ENCODE measurements at regions of chr14 and their contacts with region 1.

Region 1: GRCh38 chr14:36320200-36320896 is at the start of gene MBIP:
- DNase-seq: peak; percentile 78 to 95
- H3K4me3 ChIP-seq: peak within 1 kb of the TSS; percentile 68 to 93
- H3K27ac ChIP-seq: peak within 1 kb of the TSS; percentile 62 to 82
- H3K4me1 ChIP-seq: peaks cover 0 to 7% of the 10 kb centered on the region in 2 donors
- H3K27me3 ChIP-seq: no peaks in the 10 kb centered on the region
- CTCF ChIP-seq: no peak
- total RNA-seq, gene MBIP: 2.2 TPM

Region 2: DNA sequence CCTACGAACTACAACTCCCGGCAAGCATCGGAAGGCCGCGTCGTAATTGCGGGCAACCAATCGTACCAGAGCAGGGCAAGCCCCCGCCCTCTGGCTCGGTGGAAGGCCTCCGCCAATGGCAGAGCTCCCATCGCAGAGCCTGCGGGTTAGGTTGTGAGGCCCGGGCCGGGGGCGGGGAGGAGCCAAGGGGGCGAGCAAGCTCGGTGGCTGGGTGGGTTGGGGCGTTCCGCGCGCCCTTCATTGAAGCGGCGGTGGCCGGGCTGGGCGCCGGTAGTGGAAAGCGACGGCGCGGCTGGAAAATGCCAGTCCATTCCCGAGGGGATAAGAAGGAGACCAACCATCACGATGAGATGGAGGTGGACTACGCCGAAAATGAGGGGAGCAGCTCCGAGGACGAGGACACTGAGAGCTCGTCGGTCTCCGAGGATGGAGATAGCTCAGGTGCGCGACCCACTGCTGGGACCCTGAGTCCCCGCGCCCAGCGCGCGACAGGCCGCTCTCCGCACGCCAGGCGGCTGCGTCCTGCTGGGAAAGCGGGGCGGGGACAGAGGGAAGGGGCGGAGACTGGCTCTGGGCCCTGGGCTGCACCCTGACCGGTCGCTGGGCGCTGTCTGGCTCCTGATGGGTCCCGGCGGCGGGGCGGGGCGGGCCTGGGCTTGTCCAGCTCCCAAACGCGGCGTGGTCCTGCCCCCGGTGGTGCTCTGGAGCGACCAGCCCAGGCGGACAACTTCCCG is 494.0 kb before region 1 on chr14 and contains the start of gene BRMS1L:
- intact Hi-C with region 1: loop called (anchors 2 kb)
- DNase-seq: peak; percentile 96 to 99
- H3K4me3 ChIP-seq: peak within 1 kb of the TSS; percentile 90 to 92
- H3K27ac ChIP-seq: peak within 1 kb of the TSS; percentile 98 to 99
- H3K4me1 ChIP-seq: peaks cover 0 to 4% of the 10 kb centered on the region in 2 donors
- H3K27me3 ChIP-seq: no peaks in the 10 kb centered on the region
- CTCF ChIP-seq: no peak
- total RNA-seq, gene BRMS1L: 7.7 TPM

Region 3: DNA sequence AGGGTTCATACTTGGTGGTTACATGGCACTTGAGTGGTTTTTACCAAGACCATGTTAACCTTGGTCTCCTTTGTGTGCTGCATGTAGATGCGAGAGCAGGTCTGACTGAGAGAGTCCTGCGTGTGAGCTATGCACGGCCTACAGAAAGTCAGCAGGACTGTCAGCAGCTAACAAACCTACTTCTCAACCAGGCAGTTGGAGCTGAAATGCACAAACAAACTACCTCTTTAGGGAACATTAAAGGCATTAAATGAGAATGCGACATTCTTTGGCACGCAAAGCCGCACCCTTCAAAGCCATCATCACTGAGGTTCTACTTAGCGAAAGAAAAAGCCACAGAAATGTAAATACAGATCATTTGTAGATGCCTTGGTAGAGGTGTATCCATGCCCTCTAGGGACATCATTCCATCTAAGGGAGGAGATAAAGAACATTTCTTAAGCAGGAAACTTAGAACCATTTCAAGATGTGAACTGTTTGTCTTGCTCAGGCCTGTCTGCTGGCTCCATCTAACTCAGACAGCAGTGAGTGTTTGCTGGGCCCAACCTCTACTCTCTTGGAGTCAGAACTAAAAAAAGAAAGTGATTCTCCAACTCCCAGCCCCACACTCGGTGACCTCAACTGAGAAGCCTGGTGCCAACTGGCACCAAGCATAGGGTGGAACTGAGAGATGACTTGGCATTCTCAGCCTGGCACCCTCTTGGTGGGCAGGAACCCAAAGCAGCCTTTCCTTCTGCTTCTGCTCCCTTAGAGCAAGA is 63.5 kb after region 1 on chr14:
- intact Hi-C with region 1: loop called (anchors 5 kb)
- DNase-seq: peak; percentile 49 to 83
- H3K4me3 ChIP-seq: no peak overlapping the region
- H3K27ac ChIP-seq: peak overlapping the region; percentile 76 to 86
- H3K4me1 ChIP-seq: peaks cover 0 to 6% of the 10 kb centered on the region in 2 donors
- H3K27me3 ChIP-seq: no peaks in the 10 kb centered on the region
- CTCF ChIP-seq: no peak

Region 4: DNA sequence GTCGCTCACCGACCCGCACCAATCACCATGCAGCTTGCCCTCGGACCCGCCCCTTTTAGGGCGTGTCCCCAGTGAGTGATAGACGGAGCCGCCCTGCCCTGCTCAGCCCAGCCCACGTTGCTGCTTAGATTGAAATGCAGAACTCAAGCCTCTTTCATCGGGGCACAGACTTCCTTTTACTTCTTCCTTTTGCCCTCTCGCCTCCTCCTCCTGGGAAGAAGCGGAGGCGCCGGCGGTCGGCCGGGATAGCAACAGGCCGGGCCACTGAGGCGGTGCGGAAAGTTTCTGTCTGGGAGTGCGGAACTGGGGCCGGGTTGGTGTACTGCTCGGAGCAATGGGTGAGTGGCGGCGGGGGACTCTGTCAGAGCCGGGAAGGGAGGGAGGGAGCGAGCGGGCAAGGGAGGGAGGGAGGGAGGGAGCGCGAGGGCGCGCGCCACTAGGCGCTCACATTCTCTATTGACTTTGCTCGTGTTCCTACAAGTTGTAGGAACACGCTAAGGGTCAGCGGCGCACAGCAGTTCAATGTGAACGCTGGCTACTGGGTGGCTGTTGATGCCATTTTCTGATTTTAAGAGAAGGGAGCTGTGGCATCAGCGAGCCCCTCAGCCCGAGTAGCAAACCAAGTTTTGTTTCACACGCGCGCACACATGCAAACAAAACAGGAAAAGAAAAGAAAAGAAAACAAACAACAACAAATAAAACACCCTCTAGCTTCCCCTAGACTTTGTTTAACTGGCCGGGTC is 341.6 kb after region 1 on chr14 and contains the start of gene PAX9:
- intact Hi-C with region 1: loop called (anchors 5 kb)
- DNase-seq: no peak
- H3K4me3 ChIP-seq: peak within 1 kb of the TSS; percentile 51 to 63
- H3K27ac ChIP-seq: peak within 1 kb of the TSS in 1 of 2 donors; percentile 48
- H3K4me1 ChIP-seq: peaks cover 7 to 28% of the 10 kb centered on the region in 2 donors
- H3K27me3 ChIP-seq: peaks cover 32% of the 10 kb centered on the region
- CTCF ChIP-seq: no peak
- total RNA-seq, gene PAX9: not detected

Region 5: DNA sequence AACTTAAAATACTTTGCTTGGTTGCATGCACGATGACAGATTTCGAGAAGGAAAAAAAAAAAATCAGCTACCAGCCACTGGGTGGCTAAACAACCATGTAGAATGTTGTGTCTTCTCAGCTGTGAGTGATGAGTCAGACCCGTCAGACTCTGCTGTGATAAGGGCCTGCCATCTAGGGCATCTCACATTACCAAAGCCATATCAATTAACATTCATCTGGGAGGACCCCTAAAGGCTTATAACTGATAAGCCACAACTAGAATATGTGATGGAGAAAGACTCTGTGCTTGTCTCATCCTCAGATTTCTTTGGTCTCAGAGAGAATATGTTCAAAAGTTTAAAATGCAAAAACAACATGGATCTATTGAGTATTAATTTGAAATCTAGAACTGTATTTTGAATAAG is 452.8 kb after region 1 on chr14:
- intact Hi-C with region 1: no loop called
- DNase-seq: no peak
- H3K4me3 ChIP-seq: no peak overlapping the region
- H3K27ac ChIP-seq: no peak overlapping the region
- H3K4me1 ChIP-seq: no peaks in the 10 kb centered on the region
- H3K27me3 ChIP-seq: no peaks in the 10 kb centered on the region
- CTCF ChIP-seq: no peak

Measured in ascending aorta (tissue), 2 donors.